Psoas muscle (tissue), 8 donors: ENCODE measurements at regions of chr19 and their contacts with region 1.

Region 1: DNA sequence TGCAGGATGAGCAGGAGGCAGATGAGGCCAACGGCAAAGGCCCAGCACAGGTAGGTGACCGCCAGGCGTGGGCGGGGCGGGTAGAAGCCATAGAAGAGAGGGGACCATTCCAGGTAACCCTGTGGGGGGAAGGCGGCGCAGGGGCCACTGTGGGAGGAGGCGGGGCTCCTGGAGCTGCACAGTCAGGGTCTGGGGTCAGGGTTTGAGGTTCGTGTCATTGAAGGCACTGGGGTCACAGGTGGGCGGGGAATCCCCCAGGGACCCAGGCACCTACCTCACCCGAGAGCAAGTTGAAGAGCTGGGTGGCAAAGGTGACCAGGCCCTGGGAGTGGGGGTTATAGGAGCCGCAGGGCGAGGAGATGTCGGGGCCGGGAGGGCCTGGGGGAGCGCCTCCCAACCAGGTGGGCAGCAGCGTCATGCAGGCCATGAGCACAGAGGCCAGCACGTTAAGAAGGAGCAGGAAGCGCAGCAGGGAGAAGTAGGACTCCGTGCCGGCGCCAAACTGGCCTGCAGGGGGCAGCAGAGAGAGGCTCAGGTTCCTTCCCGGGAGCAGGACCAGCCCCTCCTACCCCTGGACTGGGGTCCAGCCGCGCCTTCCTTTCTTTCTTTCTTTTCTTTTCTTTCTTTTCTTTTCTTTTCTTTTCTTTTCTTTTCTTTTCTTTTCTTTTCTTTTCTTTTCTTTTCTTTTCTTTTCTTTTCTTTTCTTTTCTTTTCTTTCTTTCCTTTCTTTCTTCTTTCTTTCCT is 4.6 kb downstream of the TMC4 start:
- DNase-seq: peak; percentile 91 to 96
- ATAC-seq: peak; percentile 88 to 97 (median 92)
- H3K4me3 ChIP-seq: no peak overlapping the region
- H3K27ac ChIP-seq: no peak overlapping the region
- H3K4me1 ChIP-seq: no peaks in the 10 kb centered on the region
- H3K27me3 ChIP-seq: peaks cover 0 to 26% (median 5%) of the 10 kb centered on the region in 3 donors
- CTCF ChIP-seq: peak; percentile 86

Region 2: DNA sequence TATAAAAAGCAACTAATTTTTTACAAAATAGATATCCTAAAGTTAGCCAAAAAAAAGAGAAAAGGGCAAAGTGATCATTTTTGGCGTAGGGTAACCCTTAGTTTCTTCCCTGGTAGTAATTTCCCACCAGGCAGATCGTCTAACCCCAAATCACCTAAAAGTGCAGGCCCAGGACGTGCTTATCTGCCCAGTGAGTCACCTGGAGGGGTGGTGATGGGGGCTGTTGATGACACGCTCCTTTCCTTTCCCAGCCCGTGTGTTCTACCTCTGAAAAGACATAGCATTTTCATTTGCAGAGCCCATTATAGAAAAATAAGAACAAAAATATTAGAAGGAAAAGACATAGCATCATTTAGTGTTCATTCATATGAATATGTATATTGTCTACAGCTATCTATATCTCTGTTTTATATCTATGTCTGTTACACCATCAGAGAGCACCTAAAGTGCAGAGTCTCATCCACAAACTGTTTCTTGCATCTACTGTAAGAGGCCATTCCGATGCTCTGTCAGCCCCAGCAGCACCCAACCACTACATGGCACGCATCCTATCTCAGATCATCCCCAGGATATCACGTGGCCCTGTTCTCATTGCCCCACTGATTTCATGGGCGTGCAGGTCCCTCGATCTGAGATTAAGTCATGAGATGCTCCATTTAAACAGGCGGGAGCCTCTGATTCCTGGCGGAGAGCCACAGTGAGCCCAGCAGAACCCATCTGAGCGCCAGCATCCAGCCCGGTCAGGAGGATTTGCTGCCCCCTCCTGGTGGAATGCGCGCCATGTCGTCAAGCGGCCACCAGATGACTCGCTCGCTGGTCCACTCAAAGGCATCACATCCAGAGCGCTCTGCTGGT is 63.0 kb after region 1 on chr19:
- intact Hi-C with region 1: loop called (anchors 2 kb)
- DNase-seq: peak; percentile 87 to 89
- ATAC-seq: peak; percentile 75 to 90 (median 88)
- H3K4me3 ChIP-seq: no peak overlapping the region
- H3K27ac ChIP-seq: no peak overlapping the region
- H3K4me1 ChIP-seq: no peaks in the 10 kb centered on the region
- H3K27me3 ChIP-seq: peaks cover 0 to 9% (median 2%) of the 10 kb centered on the region in 3 donors
- CTCF ChIP-seq: peak; percentile 84